B cell (primary cell): ENCODE measurements at regions of chr2 and their contacts with region 1.

Region 1: GRCh38 chr2:233251306-233252116 is at the start of gene ATG16L1:
- DNase-seq: peak; percentile 96
- ATAC-seq: peak; percentile 99
- H3K4me3 ChIP-seq: peak within 1 kb of the TSS; percentile 81 to 94 (median 93)
- H3K4me3 Mint-ChIP-seq: peak within 1 kb of the TSS; percentile 96
- H3K27ac ChIP-seq: peak within 1 kb of the TSS; percentile 72 to 81
- H3K27ac Mint-ChIP-seq: peak within 1 kb of the TSS; percentile 91
- H3K4me1 ChIP-seq: peaks cover 20 to 28% of the 10 kb centered on the region in 2 donors
- H3K4me1 Mint-ChIP-seq: peaks cover 49% of the 10 kb centered on the region
- H3K27me3 ChIP-seq: no peaks in the 10 kb centered on the region
- H3K27me3 Mint-ChIP-seq: no peaks in the 10 kb centered on the region
- CTCF ChIP-seq: peak; percentile 93
- total RNA-seq, gene ATG16L1: 69.9 TPM in 2 replicates

Region 2: GRCh38 chr2:232854082-232854481 is 397.4 kb before region 1 on chr2:
- CTCF ChIA-PET with region 1: interaction called, 28 read pairs
- POLR2A ChIA-PET with region 1: no interaction called
- intact Hi-C with region 1: loop called (anchors 1 kb)
- DNase-seq: no peak
- ATAC-seq: no peak
- H3K4me3 ChIP-seq: no peak overlapping the region
- H3K4me3 Mint-ChIP-seq: no peak overlapping the region
- H3K27ac ChIP-seq: no peak overlapping the region
- H3K27ac Mint-ChIP-seq: no peak overlapping the region
- H3K4me1 ChIP-seq: no peaks in the 10 kb centered on the region
- H3K4me1 Mint-ChIP-seq: no peaks in the 10 kb centered on the region
- H3K27me3 ChIP-seq: no peaks in the 10 kb centered on the region
- H3K27me3 Mint-ChIP-seq: no peaks in the 10 kb centered on the region
- CTCF ChIP-seq: no peak

Region 3: GRCh38 chr2:233041722-233042323 is 209.7 kb before region 1 on chr2:
- CTCF ChIA-PET with region 1: no interaction called
- POLR2A ChIA-PET with region 1: no interaction called
- intact Hi-C with region 1: no loop called
- DNase-seq: no peak
- ATAC-seq: no peak
- H3K4me3 ChIP-seq: no peak overlapping the region
- H3K4me3 Mint-ChIP-seq: no peak overlapping the region
- H3K27ac ChIP-seq: no peak overlapping the region
- H3K27ac Mint-ChIP-seq: no peak overlapping the region
- H3K4me1 ChIP-seq: no peaks in the 10 kb centered on the region
- H3K4me1 Mint-ChIP-seq: no peaks in the 10 kb centered on the region
- H3K27me3 ChIP-seq: peaks cover 0 to 4% (median 0%) of the 10 kb centered on the region in 4 experiments
- H3K27me3 Mint-ChIP-seq: peaks cover 17% of the 10 kb centered on the region
- CTCF ChIP-seq: no peak

Region 4: GRCh38 chr2:233075966-233076339 is 175.6 kb before region 1 on chr2:
- CTCF ChIA-PET with region 1: interaction called, 6 read pairs
- POLR2A ChIA-PET with region 1: no interaction called
- intact Hi-C with region 1: loop called (anchors 2 kb)
- DNase-seq: peak; percentile 86
- ATAC-seq: peak; percentile 83
- H3K4me3 ChIP-seq: peak overlapping the region; percentile 8 to 53 (median 35)
- H3K4me3 Mint-ChIP-seq: no peak overlapping the region
- H3K27ac ChIP-seq: peak overlapping the region; percentile 77 to 87
- H3K27ac Mint-ChIP-seq: no peak overlapping the region
- H3K4me1 ChIP-seq: peaks cover 91% of the 10 kb centered on the region in 2 donors
- H3K4me1 Mint-ChIP-seq: peaks cover 50% of the 10 kb centered on the region
- H3K27me3 ChIP-seq: no peaks in the 10 kb centered on the region
- H3K27me3 Mint-ChIP-seq: no peaks in the 10 kb centered on the region
- CTCF ChIP-seq: no peak

Region 5: DNA sequence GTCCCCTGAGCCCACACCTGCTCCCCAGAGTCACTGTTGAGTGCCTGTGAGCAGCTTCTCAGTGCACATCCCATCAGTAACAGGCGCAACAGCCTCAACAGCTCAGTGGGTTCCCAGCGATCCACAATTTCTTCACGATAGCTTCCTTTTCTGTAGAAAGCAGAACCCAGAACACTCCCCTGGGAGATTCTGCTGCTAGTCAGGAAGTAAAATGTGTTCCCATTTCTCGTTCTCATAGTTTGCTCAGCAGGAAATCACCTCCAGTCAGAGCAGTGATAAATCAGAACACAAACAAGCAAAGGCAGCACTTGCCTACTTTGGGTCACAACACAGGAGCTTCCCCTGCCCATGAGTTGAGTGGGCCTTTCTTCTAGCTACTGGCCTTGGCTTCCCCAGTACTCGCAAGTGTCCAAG is 49.0 kb before region 1 on chr2:
- CTCF ChIA-PET with region 1: interaction called, 7 read pairs
- POLR2A ChIA-PET with region 1: interaction called, 3 read pairs
- intact Hi-C with region 1: loop called (anchors 5 kb)
- DNase-seq: peak; percentile 63
- ATAC-seq: peak; percentile 68
- H3K4me3 ChIP-seq: no peak overlapping the region
- H3K4me3 Mint-ChIP-seq: peak overlapping the region; percentile 59
- H3K27ac ChIP-seq: peak overlapping the region; percentile 4 to 75
- H3K27ac Mint-ChIP-seq: peak overlapping the region; percentile 86
- H3K4me1 ChIP-seq: peaks cover 18 to 24% of the 10 kb centered on the region in 2 donors
- H3K4me1 Mint-ChIP-seq: peaks cover 38% of the 10 kb centered on the region
- H3K27me3 ChIP-seq: no peaks in the 10 kb centered on the region
- H3K27me3 Mint-ChIP-seq: no peaks in the 10 kb centered on the region
- CTCF ChIP-seq: no peak

Region 6: DNA sequence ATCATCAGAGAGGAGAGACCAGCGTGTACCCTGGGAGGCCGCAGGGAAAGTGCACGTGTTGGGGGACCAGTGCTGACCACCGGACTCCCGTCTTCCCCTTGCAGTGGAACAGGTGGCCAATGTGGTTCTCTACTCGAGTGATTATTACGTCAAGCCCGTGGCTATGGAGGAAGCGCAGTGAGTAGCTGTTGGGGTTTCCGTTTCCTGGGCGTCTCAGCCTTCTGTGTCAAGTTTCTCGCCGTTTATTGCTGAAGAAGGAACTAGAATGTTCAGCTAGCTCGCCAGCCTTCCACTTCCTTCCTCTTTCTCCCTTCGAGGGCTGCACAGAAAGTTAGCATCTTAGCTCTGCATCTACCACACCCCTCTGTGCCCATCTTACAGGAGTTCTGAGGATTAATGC is 80.0 kb after region 1 on chr2:
- CTCF ChIA-PET with region 1: interaction called, 9 read pairs
- POLR2A ChIA-PET with region 1: no interaction called
- intact Hi-C with region 1: loop called (anchors 1 kb)
- DNase-seq: peak; percentile 96
- ATAC-seq: peak; percentile 91
- H3K4me3 ChIP-seq: peak overlapping the region in 2 of 5 experiments; percentile 19 to 32
- H3K4me3 Mint-ChIP-seq: peak overlapping the region; percentile 73
- H3K27ac ChIP-seq: peak overlapping the region; percentile 92 to 97
- H3K27ac Mint-ChIP-seq: peak overlapping the region; percentile 94
- H3K4me1 ChIP-seq: peaks cover 66 to 78% of the 10 kb centered on the region in 2 donors
- H3K4me1 Mint-ChIP-seq: peaks cover 79% of the 10 kb centered on the region
- H3K27me3 ChIP-seq: no peaks in the 10 kb centered on the region
- H3K27me3 Mint-ChIP-seq: no peaks in the 10 kb centered on the region
- CTCF ChIP-seq: no peak